Lower leg skin (tissue), 4 donors: ENCODE measurements at regions of chr1 and their contacts with region 1.

Region 1: GRCh38 chr1:119613769-119614720 is 34.0 kb downstream of the ZNF697 start:
- DNase-seq: peak; percentile 86 to 96
- H3K4me3 ChIP-seq: no peak overlapping the region
- CTCF ChIP-seq: peak in 1 of 3 donors; percentile 35
- POLR2A ChIP-seq: no peak

Region 2: GRCh38 chr1:119662034-119662437 is 48.0 kb after region 1 on chr1:
- intact Hi-C with region 1: loop called (anchors 2 kb)
- DNase-seq: no peak
- H3K4me3 ChIP-seq: no peak overlapping the region
- CTCF ChIP-seq: no peak
- POLR2A ChIP-seq: no peak

Region 3: DNA sequence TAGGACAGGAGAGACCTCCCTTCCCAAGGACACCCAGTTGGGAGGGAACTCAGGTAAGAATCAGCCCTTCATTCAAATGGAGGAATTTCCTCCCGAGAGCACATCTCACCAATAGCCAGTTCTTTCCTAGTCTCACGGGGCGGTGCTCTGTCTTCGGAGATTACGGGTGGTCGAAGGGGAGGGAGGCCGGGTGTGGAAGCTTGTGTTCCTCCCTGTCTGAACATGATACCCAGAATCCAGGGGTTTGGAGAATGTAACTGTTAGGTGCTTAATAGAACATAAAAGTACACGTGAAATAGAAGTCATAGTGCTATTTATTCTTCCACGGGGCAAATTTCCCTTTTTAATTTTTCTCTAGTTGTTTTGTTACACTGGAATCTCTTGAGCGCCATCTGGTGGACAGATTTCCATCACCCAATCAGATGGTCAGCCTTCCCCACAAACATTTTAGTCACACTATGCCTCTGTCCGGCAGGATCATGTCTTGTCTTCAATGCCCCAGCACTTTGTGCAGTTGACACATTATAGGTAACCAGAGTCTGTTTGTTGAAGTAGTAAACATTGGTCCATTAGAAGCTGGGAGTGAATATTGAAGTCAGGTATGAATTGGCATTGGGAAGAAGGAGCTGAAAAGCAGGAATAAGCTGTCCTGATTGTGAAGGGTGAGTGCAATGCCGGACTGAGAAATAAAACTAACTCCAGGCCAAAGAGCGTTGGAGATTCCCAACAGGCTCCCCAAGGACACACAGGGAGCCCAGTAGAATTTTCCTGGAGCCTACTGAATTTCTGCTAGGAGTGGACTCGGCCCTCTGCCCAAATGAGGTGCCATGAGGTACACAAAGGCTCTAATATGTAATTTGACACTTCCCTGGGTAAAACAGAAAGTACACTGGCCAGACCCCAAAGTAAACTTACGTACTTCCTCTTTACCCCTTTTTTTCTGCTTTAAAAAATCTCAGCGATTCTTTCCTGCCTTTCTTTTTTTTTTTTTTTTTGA is 61.6 kb after region 1 on chr1:
- intact Hi-C with region 1: loop called (anchors 5 kb)
- DNase-seq: peak; percentile 90 to 95
- H3K4me3 ChIP-seq: no peak overlapping the region
- CTCF ChIP-seq: peak in 1 of 3 donors; percentile 59
- POLR2A ChIP-seq: no peak

Region 4: DNA sequence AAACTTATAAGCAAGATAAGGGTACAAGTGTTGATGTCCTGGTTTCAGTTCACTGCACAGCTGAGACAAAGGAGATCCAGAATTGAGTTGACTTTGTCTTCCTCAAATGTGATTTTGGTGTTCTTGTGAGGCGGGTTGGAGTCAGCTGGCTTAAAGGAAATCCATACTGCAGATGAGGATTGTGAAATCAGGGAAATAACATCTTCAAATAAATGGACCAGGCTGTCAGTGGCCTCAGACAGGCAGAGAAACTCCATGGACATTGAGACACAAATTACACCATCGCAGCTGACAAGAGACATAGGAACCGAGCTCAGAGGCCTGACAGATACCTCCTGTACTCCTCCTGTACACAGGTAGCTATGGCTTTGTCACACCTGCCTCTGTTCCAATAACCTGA is 224.2 kb after region 1 on chr1:
- intact Hi-C with region 1: no loop called
- DNase-seq: no peak
- H3K4me3 ChIP-seq: no peak overlapping the region
- CTCF ChIP-seq: no peak
- POLR2A ChIP-seq: no peak